ENCODE measurements at regions of chr9 and their contacts with region 1.

Region 1: GRCh38 chr9:69971643-69972449 is 71.8 kb upstream of the MAMDC2 start:
- DNase-seq: peak; percentile 67
- ATAC-seq: peak; percentile 55
- H3K4me3 ChIP-seq: no peak overlapping the region
- H3K27ac ChIP-seq: no peak overlapping the region
- H3K4me1 ChIP-seq: peaks cover 7% of the 10 kb centered on the region; the same call in 1 of the 2 replicates
- H3K27me3 ChIP-seq: no peaks in the 10 kb centered on the region
- CTCF ChIP-seq: peak; percentile 90

Region 2: DNA sequence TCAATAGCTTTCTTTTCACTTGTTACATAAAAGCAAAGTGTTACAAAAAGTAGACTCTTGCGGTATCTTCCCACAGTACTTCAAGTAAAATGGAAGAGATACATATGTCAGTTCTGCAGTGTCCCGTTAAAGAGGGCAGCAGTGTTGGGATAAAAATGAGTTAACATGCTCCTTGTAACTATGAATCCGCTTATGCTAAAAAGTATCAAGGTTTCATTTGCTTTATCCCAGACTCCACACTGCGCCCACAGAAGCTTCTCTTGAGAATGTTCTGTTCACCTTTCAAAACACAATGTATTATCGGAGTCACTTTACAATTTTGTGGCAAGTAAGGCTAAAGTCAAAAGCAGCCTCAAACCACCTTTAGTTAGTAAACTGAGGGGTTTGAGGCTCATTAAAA is 212.8 kb before region 1 on chr9:
- CTCF ChIA-PET with region 1: no interaction called
- POLR2A ChIA-PET with region 1: no interaction called
- intact Hi-C with region 1: no loop called
- DNase-seq: no peak
- ATAC-seq: no peak; the same call in 1 of the 2 replicates
- H3K4me3 ChIP-seq: peak overlapping the region; percentile 99
- H3K27ac ChIP-seq: no peak overlapping the region
- H3K4me1 ChIP-seq: peaks cover 6% of the 10 kb centered on the region; the same call in 1 of the 2 replicates
- H3K27me3 ChIP-seq: no peaks in the 10 kb centered on the region
- CTCF ChIP-seq: no peak

Region 3: DNA sequence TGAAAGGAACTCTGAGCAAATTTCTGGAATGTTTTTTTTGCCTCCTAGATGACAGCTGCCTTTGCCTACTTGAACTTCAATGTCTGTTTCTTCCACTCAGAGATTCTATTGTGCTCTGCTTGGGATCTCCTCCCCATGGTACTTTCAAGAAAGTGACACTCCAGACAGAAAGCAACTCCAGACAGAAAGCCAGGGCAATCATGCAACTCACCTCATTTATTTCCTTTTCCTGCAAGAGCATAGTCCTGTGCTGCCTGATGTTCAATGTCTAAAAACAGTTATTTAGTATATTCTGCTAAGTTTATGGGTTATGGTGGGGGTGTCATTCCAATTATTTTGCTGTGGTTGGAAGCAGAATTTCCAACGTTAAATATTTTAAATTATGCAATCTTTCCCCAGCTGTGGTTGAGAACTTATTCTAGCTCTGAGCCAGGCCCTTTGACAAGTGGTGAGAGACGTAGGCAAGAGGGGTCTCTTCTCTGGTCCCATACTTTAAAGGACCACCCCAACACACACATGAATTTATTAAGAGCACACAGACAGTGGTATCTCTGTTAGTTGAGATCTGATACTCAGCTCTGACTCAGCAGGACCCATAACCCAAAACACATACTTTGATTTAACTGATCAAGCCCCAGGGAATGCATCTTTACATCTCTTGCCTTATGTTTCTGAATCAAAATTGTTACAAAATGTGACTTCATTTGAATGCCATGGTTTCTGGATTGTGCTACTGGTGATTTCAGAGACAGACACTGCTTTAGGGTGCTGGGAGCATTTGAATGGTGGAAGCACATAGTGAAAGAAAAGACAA is 32.3 kb after region 1 on chr9:
- CTCF ChIA-PET with region 1: no interaction called
- POLR2A ChIA-PET with region 1: no interaction called
- intact Hi-C with region 1: no loop called
- DNase-seq: no peak
- ATAC-seq: no peak
- H3K4me3 ChIP-seq: no peak overlapping the region
- H3K27ac ChIP-seq: no peak overlapping the region
- H3K4me1 ChIP-seq: no peaks in the 10 kb centered on the region
- H3K27me3 ChIP-seq: no peaks in the 10 kb centered on the region
- CTCF ChIP-seq: no peak

Region 4: DNA sequence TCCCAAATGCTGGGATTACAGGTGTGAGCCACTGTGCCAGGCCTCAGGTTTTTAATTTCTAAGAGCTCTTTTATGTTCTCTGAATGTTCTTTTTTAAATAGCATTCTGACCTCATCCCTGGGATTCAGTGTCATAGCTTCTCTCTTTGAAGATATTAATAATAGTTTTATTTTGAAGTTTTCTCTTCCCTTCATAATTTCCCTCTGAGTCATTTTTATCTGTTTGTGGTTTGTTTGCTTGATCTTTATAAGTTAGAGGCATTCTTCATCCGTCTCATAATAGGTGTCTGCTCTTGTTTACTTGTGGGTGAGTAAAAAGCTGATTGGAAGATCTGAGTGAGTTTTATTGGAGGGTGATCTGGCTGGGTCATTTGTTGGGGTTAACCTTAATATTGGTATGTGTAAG is 59.3 kb after region 1 on chr9:
- CTCF ChIA-PET with region 1: no interaction called
- POLR2A ChIA-PET with region 1: no interaction called
- intact Hi-C with region 1: no loop called
- DNase-seq: peak; percentile 85
- ATAC-seq: peak; percentile 89
- H3K4me3 ChIP-seq: no peak overlapping the region
- H3K27ac ChIP-seq: peak overlapping the region; percentile 50
- H3K4me1 ChIP-seq: peaks cover 11% of the 10 kb centered on the region
- H3K27me3 ChIP-seq: no peaks in the 10 kb centered on the region
- CTCF ChIP-seq: no peak

Region 5: DNA sequence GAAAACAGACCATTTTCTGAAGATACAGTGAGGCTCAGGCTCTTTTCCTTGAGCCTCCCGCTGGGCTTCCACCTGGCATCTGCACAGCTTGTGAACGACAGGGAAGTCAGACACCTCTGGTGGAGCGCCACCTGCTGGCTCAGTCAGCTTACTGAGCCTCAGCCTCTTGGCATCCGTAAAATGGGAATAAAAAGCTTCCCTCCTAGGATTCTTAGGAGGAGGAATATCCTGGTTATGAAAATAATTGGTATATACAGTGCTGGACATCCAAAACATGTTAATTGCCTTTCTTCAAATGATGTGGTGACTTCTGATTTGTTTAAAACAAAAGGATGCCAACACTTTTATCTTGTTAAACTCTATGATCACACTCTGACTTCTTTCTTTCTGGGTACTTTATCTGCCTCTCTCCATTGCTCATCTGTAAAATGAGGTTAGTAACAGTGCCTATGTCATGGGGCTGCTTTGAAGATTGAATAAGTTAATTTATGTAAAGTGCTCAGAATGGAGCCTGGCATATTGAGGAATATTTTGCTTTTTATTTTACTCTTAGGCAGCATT is 139.3 kb after region 1 on chr9:
- CTCF ChIA-PET with region 1: interaction called, 9 read pairs
- POLR2A ChIA-PET with region 1: no interaction called
- intact Hi-C with region 1: loop called (anchors 2 kb)
- DNase-seq: peak; percentile 77
- ATAC-seq: peak; percentile 70
- H3K4me3 ChIP-seq: no peak overlapping the region
- H3K27ac ChIP-seq: peak overlapping the region; percentile 76
- H3K4me1 ChIP-seq: peaks cover 24% of the 10 kb centered on the region
- H3K27me3 ChIP-seq: no peaks in the 10 kb centered on the region
- CTCF ChIP-seq: peak; percentile 89

Region 6: GRCh38 chr9:70136632-70137031 is 164.8 kb after region 1 on chr9:
- CTCF ChIA-PET with region 1: no interaction called
- POLR2A ChIA-PET with region 1: no interaction called
- intact Hi-C with region 1: no loop called
- DNase-seq: peak; percentile 76
- ATAC-seq: peak; percentile 91
- H3K4me3 ChIP-seq: no peak overlapping the region
- H3K27ac ChIP-seq: peak overlapping the region; percentile 64
- H3K4me1 ChIP-seq: peaks cover 13% of the 10 kb centered on the region
- H3K27me3 ChIP-seq: no peaks in the 10 kb centered on the region
- CTCF ChIP-seq: no peak

Region 7: DNA sequence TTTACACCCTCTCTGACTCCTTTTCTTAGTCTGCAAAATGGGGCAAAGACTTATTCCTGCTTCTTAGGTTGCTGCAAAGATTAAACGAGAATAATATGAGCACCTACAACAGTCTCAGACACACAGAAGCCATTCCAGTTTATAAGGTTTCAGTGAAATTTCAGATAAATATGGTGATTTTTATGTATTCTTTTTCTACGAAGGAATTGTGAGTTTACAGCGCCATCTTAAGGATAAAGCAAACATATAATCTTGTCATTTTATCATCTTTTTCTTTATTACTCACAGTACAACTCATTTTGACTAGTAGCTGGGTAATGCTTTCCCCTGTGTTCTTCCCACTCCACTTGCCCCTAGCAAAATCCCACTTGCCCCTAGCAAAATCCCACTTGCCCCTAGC is 257.7 kb after region 1 on chr9:
- CTCF ChIA-PET with region 1: interaction called, 3 read pairs
- POLR2A ChIA-PET with region 1: no interaction called
- intact Hi-C with region 1: loop called (anchors 1 kb)
- DNase-seq: peak; percentile 52
- ATAC-seq: no peak
- H3K4me3 ChIP-seq: no peak overlapping the region
- H3K27ac ChIP-seq: no peak overlapping the region
- H3K4me1 ChIP-seq: no peaks in the 10 kb centered on the region
- H3K27me3 ChIP-seq: no peaks in the 10 kb centered on the region
- CTCF ChIP-seq: peak; percentile 59

Measured in PC-3 (cell line).